Activated CD4-positive, alpha-beta T cell treated with anti-CD3 and anti-CD28 coated beads, Interleukin-2, amount 10 ng/mL, durations not matched to agents 7 days and 5 days (primary cell): ENCODE measurements at regions of chr2 and their contacts with region 1.

Region 1: GRCh38 chr2:26184555-26185303 is 11.8 kb downstream of the GAREM2 start:
- DNase-seq: peak; percentile 88
- H3K4me3 Mint-ChIP-seq: peak overlapping the region; percentile 75
- H3K27ac Mint-ChIP-seq: peak overlapping the region; percentile 84
- H3K4me1 Mint-ChIP-seq: peaks cover 15% of the 10 kb centered on the region
- H3K27me3 Mint-ChIP-seq: peaks cover 15% of the 10 kb centered on the region

Region 2: DNA sequence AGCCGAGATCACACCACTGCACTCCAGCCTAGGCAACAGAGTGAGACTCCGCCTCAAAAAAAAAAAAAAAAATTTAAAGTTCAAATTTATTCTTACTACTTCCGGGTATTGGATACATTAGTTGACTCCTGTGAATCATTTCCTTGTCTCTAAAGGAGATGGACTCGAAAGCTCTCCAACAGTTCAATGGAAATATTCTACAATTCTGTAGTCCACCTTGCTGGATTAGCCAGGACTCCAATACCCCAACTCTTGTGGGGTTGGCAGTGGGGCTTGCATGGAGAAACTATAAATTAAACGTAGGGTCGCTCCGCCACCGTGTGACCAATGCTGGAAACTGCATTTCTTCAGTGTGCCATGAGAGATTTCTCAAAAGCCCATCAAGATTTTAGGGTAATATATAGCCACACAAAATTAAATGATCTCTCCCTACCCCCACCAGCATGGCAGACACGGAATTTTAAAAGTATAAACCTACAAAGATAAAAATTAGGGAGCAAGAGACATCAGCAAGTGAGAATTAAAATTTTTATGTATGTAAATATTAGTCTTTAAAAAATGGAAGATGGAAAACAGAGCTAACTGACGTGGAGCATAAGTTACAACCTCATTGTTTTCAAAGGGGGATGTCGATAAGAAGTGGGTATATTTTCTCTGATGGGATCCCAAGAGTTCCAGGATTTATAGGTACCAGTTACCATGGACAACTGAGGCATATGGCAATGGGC is 39.6 kb before region 1 on chr2:
- CTCF ChIA-PET with region 1: no interaction called
- POLR2A ChIA-PET with region 1: no interaction called
- DNase-seq: peak; percentile 75
- H3K4me3 Mint-ChIP-seq: no peak overlapping the region
- H3K27ac Mint-ChIP-seq: no peak overlapping the region
- H3K4me1 Mint-ChIP-seq: peaks cover 2% of the 10 kb centered on the region
- H3K27me3 Mint-ChIP-seq: peaks cover 9% of the 10 kb centered on the region

Region 3: GRCh38 chr2:26161926-26162325 is 22.8 kb before region 1 on chr2:
- CTCF ChIA-PET with region 1: no interaction called
- POLR2A ChIA-PET with region 1: no interaction called
- DNase-seq: no peak
- H3K4me3 Mint-ChIP-seq: no peak overlapping the region
- H3K27ac Mint-ChIP-seq: no peak overlapping the region
- H3K4me1 Mint-ChIP-seq: no peaks in the 10 kb centered on the region
- H3K27me3 Mint-ChIP-seq: peaks cover 8% of the 10 kb centered on the region

Region 4: DNA sequence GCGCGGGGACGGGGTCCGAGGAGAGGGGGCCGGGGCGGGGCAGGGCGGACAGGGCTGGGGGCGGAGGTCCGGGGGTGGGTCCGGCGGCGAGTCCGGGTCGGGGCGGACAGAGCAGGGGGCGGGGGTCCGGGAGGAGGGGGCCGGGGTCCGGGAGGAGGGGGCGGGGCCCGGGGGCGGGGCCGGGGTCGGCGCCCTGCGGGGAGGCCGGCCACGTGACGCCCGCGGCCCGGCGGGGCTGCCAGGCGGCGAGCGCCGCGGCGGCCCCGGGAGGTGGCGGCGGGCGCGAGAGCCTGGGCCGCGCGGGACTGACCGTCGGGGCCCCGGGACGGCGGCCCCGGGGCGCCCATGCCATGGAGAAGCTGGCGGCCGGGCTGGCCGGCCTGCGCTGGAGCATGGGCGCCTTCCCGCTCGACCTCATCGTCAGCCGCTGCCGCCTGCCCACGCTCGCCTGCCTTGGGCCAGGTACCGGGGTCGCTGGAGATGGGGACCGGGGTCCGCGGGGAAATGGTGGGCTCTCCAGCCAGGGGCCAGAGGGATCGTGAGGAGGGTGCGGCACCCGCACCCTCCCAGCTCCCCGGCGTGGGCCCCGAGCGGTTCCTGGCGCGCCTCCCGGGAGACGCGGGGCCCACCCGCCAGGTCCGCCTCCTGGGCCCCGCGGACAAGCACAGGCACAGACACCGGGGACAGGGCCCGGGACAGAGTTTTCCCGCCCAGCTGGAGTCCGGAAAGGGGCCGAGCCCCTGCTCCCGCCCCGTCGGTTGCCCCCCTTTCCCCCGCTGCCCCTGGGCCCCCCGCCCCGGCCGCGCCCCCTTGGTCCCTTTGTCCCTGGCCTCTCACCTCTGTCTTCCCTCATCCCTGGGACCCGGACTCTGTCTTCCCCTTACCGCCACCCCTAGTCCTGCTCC is 11.6 kb before region 1 on chr2 and contains the start of gene GAREM2:
- CTCF ChIA-PET with region 1: interaction called, 24 read pairs
- POLR2A ChIA-PET with region 1: no interaction called
- DNase-seq: no peak
- H3K4me3 Mint-ChIP-seq: peak within 1 kb of the TSS; percentile 68
- H3K27ac Mint-ChIP-seq: no peak within 1 kb of the TSS
- H3K4me1 Mint-ChIP-seq: peaks cover 16% of the 10 kb centered on the region
- H3K27me3 Mint-ChIP-seq: peaks cover 35% of the 10 kb centered on the region
- total RNA-seq, gene GAREM2: 2.9 to 3.5 TPM